Sigmoid colon (tissue), 7 donors: ENCODE measurements at regions of chr7 and their contacts with region 1.

Region 1: DNA sequence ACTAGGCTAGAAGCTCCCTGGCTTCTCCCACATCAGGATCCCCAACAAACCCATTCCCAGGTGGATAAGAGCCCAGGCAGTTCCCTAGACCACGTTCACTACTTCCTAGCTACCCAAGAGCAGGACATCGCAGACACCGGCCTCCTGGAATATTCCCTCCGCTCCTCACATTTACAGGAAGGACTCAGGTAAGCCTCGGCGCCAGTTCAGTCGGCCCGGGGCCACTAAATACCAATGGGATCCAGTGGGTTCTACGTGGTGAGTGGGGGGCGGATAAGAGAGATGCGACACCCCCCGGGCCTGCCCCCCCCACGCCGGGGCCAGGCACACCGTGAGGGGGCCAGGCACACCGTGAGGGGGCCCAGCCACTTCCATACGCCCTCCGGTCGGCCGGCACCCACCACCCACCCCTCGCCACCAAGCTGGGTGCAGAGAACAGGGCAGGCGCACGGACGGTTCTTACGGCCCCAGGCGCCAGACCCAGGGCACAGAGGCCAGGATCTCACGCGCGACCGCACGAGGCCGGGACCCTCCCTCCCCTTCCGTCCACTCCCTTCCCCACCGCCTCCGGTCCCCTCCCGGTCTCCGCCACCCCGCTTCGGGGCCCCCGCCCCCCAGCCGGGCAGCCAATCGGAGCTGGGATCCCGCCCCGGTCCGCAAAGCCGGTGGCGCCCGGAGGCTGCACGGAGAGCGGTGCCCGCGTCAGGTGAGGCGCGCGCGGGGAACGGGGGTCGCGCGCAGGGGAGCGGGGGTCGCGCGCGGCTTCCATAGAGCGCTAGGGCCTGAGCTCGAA is at the start of gene BLVRA:
- DNase-seq: peak; percentile 85
- H3K4me3 ChIP-seq: peak within 1 kb of the TSS; percentile 56 to 97 (median 82)
- H3K27ac ChIP-seq: peak within 1 kb of the TSS; percentile 81 to 91 (median 84)
- H3K4me1 ChIP-seq: peaks cover 0 to 28% (median 21%) of the 10 kb centered on the region in 4 donors
- H3K27me3 ChIP-seq: no peaks in the 10 kb centered on the region
- CTCF ChIP-seq: no peak
- EP300 ChIP-seq: no peak
- POLR2A ChIP-seq: peak in 1 of 2 donors; percentile 21
- total RNA-seq, gene BLVRA: 60.4 to 105 (median 94.0) TPM

Region 2: GRCh38 chr7:42580061-42580460 is 1178.2 kb before region 1 on chr7:
- intact Hi-C with region 1: no loop called
- DNase-seq: no peak
- H3K4me3 ChIP-seq: no peak overlapping the region
- H3K27ac ChIP-seq: no peak overlapping the region
- H3K4me1 ChIP-seq: peaks cover 0 to 24% (median 18%) of the 10 kb centered on the region in 4 donors
- H3K27me3 ChIP-seq: no peaks in the 10 kb centered on the region
- CTCF ChIP-seq: no peak
- EP300 ChIP-seq: no peak
- POLR2A ChIP-seq: no peak

Region 3: DNA sequence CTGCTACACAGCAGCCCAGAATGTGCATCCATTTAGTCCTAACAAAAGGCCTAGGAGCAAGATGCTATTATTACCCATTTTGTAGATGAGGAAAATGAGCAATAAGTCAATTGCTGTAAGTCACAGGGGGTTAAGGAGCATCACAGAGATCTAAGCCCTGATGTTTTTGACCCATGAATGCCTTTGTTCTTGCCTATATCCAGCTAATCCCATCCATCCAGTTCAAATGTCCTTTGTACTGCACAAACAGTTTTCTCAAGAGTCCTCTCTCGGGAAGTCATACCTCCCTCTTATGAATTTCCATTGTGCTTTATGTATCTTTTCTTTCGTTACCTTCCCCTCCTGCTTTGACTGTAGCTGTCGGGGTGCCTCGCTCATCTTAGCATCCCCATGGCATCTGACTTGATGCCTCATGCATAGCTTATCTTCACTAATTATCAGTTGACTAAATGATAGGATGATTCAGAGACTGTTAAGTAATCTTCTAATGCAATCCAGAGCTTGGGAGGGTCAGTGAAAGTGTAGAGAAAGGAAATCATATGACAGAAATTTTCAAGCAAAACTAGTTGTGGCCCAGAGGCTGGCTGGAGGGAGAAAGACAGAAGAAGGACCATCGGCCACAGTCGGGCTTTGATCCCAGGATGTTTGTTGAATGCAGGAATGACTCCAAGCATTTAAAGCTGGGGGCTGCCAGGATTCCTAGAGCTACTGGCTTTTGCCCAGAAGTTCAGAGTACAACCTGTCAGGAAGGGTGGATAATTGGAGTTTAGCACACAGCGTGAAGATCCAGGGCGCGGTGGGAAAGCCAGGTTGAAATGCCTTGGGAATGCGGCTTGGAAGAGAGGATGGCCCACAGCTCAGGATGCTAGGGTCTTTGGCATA is 23.7 kb after region 1 on chr7:
- intact Hi-C with region 1: loop called (anchors 2 kb)
- DNase-seq: peak; percentile 64
- H3K4me3 ChIP-seq: no peak overlapping the region
- H3K27ac ChIP-seq: peak overlapping the region in 2 of 4 donors; percentile 54 to 82
- H3K4me1 ChIP-seq: peaks cover 0 to 57% (median 54%) of the 10 kb centered on the region in 4 donors
- H3K27me3 ChIP-seq: no peaks in the 10 kb centered on the region
- CTCF ChIP-seq: no peak
- EP300 ChIP-seq: no peak
- POLR2A ChIP-seq: no peak

Region 4: GRCh38 chr7:43824963-43825362 is 66.7 kb after region 1 on chr7:
- intact Hi-C with region 1: no loop called
- DNase-seq: no peak
- H3K4me3 ChIP-seq: no peak overlapping the region
- H3K27ac ChIP-seq: no peak overlapping the region
- H3K4me1 ChIP-seq: no peaks in the 10 kb centered on the region
- H3K27me3 ChIP-seq: no peaks in the 10 kb centered on the region
- CTCF ChIP-seq: no peak
- EP300 ChIP-seq: no peak
- POLR2A ChIP-seq: no peak

Region 5: DNA sequence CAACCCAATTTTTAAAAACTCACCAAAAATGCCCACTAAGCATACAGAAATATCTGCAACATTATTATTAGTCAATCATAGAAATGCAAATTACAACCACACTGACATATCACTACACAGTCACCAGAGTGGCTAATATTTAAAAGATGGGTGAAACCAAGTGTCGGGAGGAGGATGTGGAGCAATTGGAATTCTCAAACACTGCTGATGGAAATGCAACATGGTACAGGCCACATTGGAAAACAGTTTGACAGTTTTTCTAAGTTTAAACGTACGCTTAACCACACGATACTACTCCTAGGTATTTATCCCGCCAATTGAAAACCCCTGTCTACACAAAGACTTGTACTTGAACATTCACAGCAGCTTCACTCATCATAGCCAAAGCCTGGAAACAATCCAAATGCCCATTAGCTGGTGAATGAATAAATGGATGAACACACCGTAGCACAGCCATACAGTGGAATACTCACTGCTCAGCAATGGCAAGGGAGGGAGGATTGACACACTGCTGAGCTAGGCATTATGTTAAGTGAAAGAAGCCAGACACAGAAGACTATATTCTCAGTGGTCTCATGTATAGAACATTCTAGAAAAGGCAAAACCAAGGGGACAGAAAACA is 414.7 kb after region 1 on chr7:
- intact Hi-C with region 1: no loop called
- DNase-seq: no peak
- H3K4me3 ChIP-seq: no peak overlapping the region
- H3K27ac ChIP-seq: no peak overlapping the region
- H3K4me1 ChIP-seq: no peaks in the 10 kb centered on the region
- H3K27me3 ChIP-seq: no peaks in the 10 kb centered on the region
- CTCF ChIP-seq: no peak
- EP300 ChIP-seq: no peak
- POLR2A ChIP-seq: no peak